Vagina (tissue), 2 donors: ENCODE measurements at regions of chrX and their contacts with region 1.

Region 1: DNA sequence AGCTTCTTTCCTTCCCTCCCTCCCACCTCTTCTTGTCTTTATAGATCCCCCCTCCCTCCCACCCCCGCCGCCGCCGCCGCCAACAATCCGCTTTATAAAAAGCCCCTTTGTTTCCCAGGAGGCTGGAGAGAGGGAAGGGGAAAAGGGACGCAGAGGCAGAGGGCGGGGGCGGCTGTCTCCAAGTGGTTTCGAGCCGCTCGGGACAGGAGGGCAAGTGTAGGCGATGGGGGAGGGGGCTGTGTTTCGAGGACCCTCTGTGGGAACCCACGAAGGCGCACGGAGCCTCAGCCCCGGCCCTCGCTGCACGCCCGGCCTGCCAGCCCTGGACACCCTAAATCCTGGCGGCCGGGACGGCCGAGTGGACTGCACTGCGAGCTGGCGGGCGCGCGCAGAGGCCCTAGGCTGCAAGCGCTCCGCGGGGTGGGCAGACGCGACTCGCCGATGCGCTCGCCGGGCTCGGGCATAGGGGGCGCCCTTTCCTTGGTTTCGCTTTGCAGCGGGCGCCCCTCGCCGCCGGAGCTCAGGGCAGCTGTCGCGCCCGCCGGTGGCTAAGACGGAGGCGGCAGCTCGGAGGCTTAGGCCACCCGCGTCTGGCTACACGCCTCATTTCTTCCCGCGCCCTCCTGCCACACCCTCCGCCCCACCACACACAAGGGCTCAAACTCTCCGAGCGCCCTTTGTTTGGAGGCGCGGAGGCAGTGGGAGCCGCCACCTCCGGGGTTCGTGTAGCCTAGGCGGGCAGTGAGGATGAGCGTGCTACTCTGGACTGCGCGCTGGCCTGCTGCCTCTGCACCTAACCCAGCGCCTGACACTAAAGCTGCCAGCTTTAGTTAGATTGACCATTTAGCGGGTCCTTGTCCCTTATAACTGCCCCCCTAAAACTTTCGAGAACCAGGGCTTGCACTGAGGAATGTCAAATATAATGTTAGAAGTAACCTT is 2.2 kb downstream of the MAMLD1 start:
- DNase-seq: peak; percentile 81 to 82
- H3K4me3 ChIP-seq: peak overlapping the region; percentile 52 to 53
- H3K27ac ChIP-seq: peak overlapping the region; percentile 92
- H3K4me1 ChIP-seq: peaks cover 11% of the 10 kb centered on the region
- H3K27me3 ChIP-seq: no peaks in the 10 kb centered on the region
- CTCF ChIP-seq: peak in 2 of 3 experiments; percentile 27 to 45
- POLR2A ChIP-seq: no peak

Region 2: GRCh38 chrX:149950681-149951080 is 414.6 kb before region 1 on chrX:
- intact Hi-C with region 1: loop called (anchors 10 kb)
- DNase-seq: no peak
- H3K4me3 ChIP-seq: no peak overlapping the region
- H3K27ac ChIP-seq: no peak overlapping the region
- H3K4me1 ChIP-seq: no peaks in the 10 kb centered on the region
- H3K27me3 ChIP-seq: no peaks in the 10 kb centered on the region
- CTCF ChIP-seq: no peak
- POLR2A ChIP-seq: no peak

Region 3: DNA sequence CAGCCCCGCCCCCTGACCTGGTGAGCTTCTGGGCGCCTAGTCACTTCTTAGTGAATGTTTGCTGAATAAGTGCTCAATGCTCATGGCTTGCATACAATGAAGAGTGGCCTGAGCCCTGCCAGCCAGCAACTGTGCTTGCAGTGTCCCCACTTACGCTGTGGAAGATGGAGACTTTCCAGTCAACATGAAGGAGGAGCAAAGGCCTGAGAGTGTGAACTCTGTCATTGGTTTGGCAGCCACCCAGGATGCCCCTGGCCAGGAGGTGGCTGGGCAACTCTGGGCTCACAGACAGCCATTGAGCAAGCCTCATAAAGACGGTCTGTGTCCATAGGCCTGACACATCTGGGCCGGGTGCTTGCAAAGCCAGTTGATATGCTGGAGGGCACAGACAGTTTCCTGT is 74.3 kb before region 1 on chrX:
- intact Hi-C with region 1: no loop called
- DNase-seq: peak; percentile 70 to 77
- H3K4me3 ChIP-seq: no peak overlapping the region
- H3K27ac ChIP-seq: no peak overlapping the region
- H3K4me1 ChIP-seq: no peaks in the 10 kb centered on the region
- H3K27me3 ChIP-seq: no peaks in the 10 kb centered on the region
- CTCF ChIP-seq: no peak
- POLR2A ChIP-seq: no peak

Region 4: GRCh38 chrX:150326541-150327247 is 38.6 kb before region 1 on chrX:
- intact Hi-C with region 1: no loop called
- DNase-seq: no peak
- H3K4me3 ChIP-seq: no peak overlapping the region
- H3K27ac ChIP-seq: no peak overlapping the region
- H3K4me1 ChIP-seq: no peaks in the 10 kb centered on the region
- H3K27me3 ChIP-seq: no peaks in the 10 kb centered on the region
- CTCF ChIP-seq: no peak
- POLR2A ChIP-seq: no peak

Region 5: DNA sequence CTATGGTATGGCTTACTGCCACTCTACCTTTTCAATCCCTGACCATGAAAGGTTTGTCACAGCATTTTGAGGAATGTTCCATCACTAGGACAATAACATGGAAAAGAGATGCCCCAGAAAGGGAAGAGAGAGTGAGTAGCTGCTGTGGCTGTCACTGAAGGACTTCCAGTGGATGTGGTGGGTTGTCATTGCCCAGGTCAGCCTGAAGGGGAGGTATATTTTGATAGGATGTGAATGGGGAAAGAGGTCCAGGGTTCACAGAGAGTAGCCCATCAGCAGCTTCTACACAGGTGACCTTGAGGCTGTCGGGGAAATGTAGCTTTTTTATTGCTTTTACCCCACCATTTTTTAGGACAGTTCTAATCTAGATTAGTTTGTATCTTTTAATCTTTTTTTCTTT is 233.9 kb after region 1 on chrX:
- intact Hi-C with region 1: no loop called
- DNase-seq: no peak
- H3K4me3 ChIP-seq: no peak overlapping the region
- H3K27ac ChIP-seq: no peak overlapping the region
- H3K4me1 ChIP-seq: no peaks in the 10 kb centered on the region
- H3K27me3 ChIP-seq: no peaks in the 10 kb centered on the region
- CTCF ChIP-seq: no peak
- POLR2A ChIP-seq: no peak